ENCODE measurements at regions of chr2 and their contacts with region 1.

Region 1: DNA sequence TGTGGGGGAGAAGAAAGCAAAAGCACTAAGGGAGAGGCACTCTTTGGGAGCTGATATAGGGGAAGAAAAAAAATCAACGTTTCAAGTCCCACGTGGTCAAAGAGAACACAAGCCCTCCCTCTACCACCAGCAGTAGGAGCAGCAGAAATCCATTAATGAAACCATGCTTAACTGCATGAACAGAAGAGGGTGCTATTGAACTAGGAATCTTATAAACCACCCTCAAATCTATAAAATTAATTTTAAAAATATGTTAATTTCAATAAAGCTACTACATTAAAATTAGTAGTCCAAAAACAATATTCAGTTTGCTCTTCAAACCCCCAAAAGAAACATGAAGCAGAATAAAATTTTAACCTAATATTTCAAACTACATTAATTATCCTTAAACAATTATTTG is 147.8 kb downstream of the TMEM18 start:
- DNase-seq: peak in 2 of 4 experiments; percentile 30 to 37
- ATAC-seq: peak; percentile 61; the same call in 1 of the 3 replicates
- H3K4me3 ChIP-seq: no peak overlapping the region
- H3K27ac ChIP-seq: no peak overlapping the region
- H3K4me1 ChIP-seq: no peaks in the 10 kb centered on the region
- H3K27me3 ChIP-seq: peaks cover 0 to 18% of the 10 kb centered on the region in 2 experiments; a peak in 4 of 5 replicates
- CTCF ChIP-seq: peak; percentile 33 to 63 (median 53); a peak in 3 of 6 replicates
- EP300 ChIP-seq: no peak
- POLR2A ChIP-seq: no peak
- RAD21 ChIP-seq: peak in 1 of 2 experiments; percentile 48; a peak in 3 of 4 replicates

Region 2: GRCh38 chr2:368386-368785 is 161.0 kb before region 1 on chr2:
- CTCF ChIA-PET with region 1: no interaction called
- POLR2A ChIA-PET with region 1: no interaction called
- in situ Hi-C with region 1: no loop called
- intact Hi-C with region 1: no loop called
- DNase-seq: no peak
- ATAC-seq: no peak
- H3K4me3 ChIP-seq: no peak overlapping the region
- H3K27ac ChIP-seq: no peak overlapping the region
- H3K4me1 ChIP-seq: no peaks in the 10 kb centered on the region
- H3K27me3 ChIP-seq: peaks cover 9 to 43% of the 10 kb centered on the region in 2 experiments; a peak in 3 of 5 replicates
- CTCF ChIP-seq: no peak
- EP300 ChIP-seq: no peak
- POLR2A ChIP-seq: no peak
- RAD21 ChIP-seq: no peak

Region 3: DNA sequence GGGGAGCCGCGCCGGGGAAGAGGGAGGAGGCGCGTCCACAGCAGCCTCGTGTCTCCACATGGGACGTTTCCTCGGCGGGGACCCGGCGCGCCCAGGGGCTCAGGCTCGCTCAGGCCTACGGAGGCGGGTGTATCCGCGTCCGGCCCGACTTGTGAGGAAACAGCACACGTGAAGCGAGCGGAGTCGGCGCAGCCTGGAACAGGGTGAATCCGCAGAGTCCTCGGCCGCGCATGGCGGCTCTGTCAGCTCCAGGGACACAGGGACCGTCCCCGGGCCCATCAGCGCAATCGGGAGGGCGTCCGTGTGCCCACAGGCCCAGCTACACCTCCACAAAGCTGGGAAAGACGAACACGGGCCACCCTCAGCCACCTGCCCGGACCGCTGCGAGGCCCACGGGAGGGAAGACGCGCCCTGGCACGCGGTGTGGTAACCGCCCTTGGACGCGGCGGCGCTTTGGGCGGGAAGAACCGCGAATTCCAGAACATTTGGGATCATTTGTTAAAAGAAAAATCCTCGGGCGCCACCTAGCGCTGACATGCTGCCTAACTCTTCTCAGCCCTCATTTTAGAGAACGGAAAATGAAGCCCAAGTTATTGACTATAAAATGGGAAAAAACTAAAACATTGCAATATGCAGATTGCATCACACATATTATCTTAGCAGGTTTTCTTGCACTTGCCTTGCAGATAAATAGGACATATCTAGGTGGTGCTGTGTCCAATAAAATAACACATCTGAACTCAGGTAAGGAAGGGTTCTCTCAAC is 107.4 kb after region 1 on chr2:
- CTCF ChIA-PET with region 1: interaction called, 8 read pairs
- POLR2A ChIA-PET with region 1: no interaction called
- in situ Hi-C with region 1: no loop called
- intact Hi-C with region 1: loop called (anchors 2 kb)
- DNase-seq: peak; percentile 49 to 68 (median 54)
- ATAC-seq: peak; percentile 85
- H3K4me3 ChIP-seq: no peak overlapping the region
- H3K27ac ChIP-seq: no peak overlapping the region
- H3K4me1 ChIP-seq: peaks cover 0 to 10% of the 10 kb centered on the region in 2 experiments; a peak in 2 of 5 replicates
- H3K27me3 ChIP-seq: peaks cover 0 to 50% of the 10 kb centered on the region in 2 experiments; a peak in 2 of 5 replicates
- CTCF ChIP-seq: peak; percentile 65 to 83 (median 79)
- EP300 ChIP-seq: no peak
- POLR2A ChIP-seq: no peak
- RAD21 ChIP-seq: peak; percentile 70 to 76

Region 4: GRCh38 chr2:714005-714741 is 184.7 kb after region 1 on chr2:
- CTCF ChIA-PET with region 1: no interaction called
- POLR2A ChIA-PET with region 1: no interaction called
- in situ Hi-C with region 1: no loop called
- intact Hi-C with region 1: no loop called
- DNase-seq: peak in 3 of 4 experiments; percentile 33 to 50 (median 34)
- ATAC-seq: peak; percentile 81
- H3K4me3 ChIP-seq: no peak overlapping the region
- H3K27ac ChIP-seq: no peak overlapping the region
- H3K4me1 ChIP-seq: no peaks in the 10 kb centered on the region; a peak in 1 of 5 replicates
- H3K27me3 ChIP-seq: peaks cover 0 to 27% of the 10 kb centered on the region in 2 experiments; a peak in 4 of 5 replicates
- CTCF ChIP-seq: peak; percentile 49 to 63 (median 49); a peak in 5 of 6 replicates
- EP300 ChIP-seq: no peak
- POLR2A ChIP-seq: no peak
- RAD21 ChIP-seq: peak; percentile 28 to 50; a peak in 2 of 4 replicates

Region 5: DNA sequence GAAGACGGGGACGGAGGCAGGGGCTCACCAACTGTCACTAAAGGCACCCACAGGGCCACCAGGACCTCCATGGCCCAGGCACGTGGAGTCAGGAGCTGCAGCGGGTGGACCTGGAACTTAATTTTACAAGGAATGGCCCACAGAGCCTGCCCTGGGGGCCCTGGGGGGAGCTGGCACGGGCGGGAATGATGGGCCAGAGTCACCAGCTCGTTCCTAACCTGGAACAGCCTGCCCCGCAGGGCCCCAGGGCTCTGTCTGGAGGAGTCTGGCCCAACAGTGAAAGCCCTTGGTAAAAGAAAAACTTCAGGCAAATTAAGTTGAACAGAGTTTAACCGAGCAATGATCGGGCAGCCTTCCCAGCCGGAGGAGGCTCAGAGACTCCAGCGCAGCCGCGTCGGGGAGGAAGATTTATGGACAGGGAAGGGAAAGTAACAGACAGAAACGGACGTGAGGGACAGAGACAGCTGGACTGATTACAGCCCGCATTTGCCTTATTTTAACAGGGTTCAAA is 266.2 kb after region 1 on chr2:
- CTCF ChIA-PET with region 1: no interaction called
- POLR2A ChIA-PET with region 1: no interaction called
- in situ Hi-C with region 1: no loop called
- intact Hi-C with region 1: no loop called
- DNase-seq: no peak
- ATAC-seq: peak; percentile 20
- H3K4me3 ChIP-seq: no peak overlapping the region
- H3K27ac ChIP-seq: no peak overlapping the region
- H3K4me1 ChIP-seq: peaks cover 0 to 7% of the 10 kb centered on the region in 2 experiments; a peak in 2 of 5 replicates
- H3K27me3 ChIP-seq: peaks cover 14 to 47% of the 10 kb centered on the region in 2 experiments; a peak in 3 of 5 replicates
- CTCF ChIP-seq: no peak
- EP300 ChIP-seq: no peak
- POLR2A ChIP-seq: no peak
- RAD21 ChIP-seq: no peak

Measured in K562 (cell line).